ENCODE measurements at regions of chr1 and their contacts with region 1.

Region 1: GRCh38 chr1:55179177-55179835 is 35.9 kb downstream of the USP24 start:
- H3K4me3 Mint-ChIP-seq: no peak overlapping the region
- H3K27ac Mint-ChIP-seq: peak overlapping the region; percentile 1
- H3K4me1 Mint-ChIP-seq: peaks cover 26% of the 10 kb centered on the region
- H3K27me3 Mint-ChIP-seq: no peaks in the 10 kb centered on the region

Region 2: DNA sequence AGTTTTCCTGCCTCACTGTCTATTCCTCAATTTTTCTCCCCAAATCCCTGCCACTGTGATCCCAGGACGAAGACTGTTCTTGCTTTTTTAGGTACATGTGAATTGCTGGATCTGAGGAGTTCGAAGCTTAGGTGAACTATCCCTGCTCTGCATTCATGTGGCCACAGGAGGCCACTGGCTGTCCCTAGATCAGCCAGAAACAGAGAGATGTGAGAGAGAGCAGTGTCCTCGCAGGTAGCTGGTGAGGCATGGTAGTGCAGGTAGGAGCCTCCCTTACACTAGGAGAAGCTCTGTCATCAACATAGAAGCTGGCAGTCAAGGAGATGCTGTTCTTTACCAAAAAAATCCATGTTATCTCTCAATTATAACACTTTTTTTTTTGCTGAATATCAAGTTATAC is 35.6 kb before region 1 on chr1:
- intact Hi-C with region 1: no loop called
- H3K4me3 Mint-ChIP-seq: no peak overlapping the region
- H3K27ac Mint-ChIP-seq: no peak overlapping the region
- H3K4me1 Mint-ChIP-seq: no peaks in the 10 kb centered on the region
- H3K27me3 Mint-ChIP-seq: no peaks in the 10 kb centered on the region

Region 3: DNA sequence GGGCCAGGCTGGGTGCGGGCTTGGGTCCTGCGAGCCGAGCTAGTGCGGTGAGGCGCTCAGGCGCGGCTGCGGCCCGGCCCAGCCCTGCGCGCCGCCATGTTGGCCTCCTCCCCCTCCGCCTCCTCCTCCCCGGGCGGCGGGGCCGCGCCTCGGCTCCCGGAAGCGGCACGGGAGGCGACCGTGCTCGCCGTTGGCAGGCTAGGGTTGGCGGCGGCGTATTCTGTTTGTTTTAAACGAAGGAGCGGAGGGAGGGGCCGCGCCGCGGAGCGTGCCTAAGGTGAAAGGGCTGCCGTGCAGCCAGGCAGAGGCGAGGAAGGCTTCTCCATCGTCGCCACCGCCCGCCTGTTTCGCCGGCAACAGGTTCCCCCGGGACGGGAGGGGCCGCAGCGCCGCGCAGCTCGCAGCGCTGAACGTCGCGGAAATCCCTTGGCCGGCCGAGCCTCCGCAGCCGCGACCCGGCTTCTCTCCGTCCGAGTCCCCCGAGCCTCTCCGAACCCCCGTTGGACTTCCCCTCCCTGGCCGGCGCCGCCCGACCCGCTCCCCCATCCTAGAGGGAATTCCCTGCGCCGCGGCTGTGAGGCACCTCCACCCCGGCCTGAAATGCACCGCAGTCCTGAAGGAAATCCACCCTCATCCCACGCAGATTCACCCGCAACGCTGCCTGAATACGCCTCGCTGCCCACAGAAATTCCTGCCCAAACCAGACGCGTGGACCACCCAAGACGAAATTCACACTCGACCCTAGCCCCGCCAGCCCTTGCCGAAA is 36.1 kb after region 1 on chr1 and contains the start of gene USP24:
- intact Hi-C with region 1: no loop called
- H3K4me3 Mint-ChIP-seq: peak within 1 kb of the TSS; percentile 91
- H3K27ac Mint-ChIP-seq: peak within 1 kb of the TSS; percentile 92
- H3K4me1 Mint-ChIP-seq: peaks cover 69% of the 10 kb centered on the region
- H3K27me3 Mint-ChIP-seq: no peaks in the 10 kb centered on the region

Region 4: DNA sequence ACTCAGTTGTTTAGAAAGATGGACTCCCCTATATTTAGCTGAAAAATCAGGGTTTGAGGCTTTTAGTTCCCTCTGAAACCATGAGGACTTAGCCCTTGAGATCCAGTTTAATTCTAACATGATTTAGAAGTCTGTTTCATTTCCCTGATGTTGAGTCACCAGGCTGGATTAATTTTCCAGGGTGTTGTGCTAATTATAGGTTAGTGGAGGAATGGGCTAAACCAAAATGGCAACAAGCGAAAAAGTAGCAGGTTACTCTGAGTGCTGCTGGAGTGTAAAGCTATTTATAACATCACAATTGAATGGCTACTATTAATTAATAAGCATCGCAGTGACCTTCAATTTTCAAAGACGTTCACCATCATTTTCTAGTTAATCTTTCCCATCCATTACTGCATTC is 51.4 kb after region 1 on chr1:
- intact Hi-C with region 1: no loop called
- H3K4me3 Mint-ChIP-seq: no peak overlapping the region
- H3K27ac Mint-ChIP-seq: no peak overlapping the region
- H3K4me1 Mint-ChIP-seq: peaks cover 7% of the 10 kb centered on the region
- H3K27me3 Mint-ChIP-seq: peaks cover 8% of the 10 kb centered on the region

Region 5: DNA sequence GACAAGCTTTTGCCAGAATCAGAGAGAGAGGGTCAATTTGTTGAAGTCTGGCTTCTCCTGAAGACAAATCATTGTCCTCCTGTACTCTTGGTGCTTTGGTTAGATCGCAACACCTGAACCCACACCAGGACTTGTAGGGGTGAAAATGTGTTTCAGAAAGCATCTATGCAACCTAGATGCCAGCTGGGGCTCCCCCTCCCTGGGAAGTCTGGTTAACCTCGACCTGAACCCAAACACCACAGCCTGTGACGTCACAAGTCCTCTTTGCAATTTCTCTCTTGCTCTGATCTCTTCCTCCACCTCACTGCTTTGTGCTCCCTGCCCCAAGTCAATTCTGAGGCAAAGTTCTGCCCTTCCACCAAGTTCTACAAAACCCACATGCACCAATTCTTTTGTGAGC is 78.7 kb after region 1 on chr1:
- intact Hi-C with region 1: loop called (anchors 5 kb)
- H3K4me3 Mint-ChIP-seq: no peak overlapping the region
- H3K27ac Mint-ChIP-seq: no peak overlapping the region
- H3K4me1 Mint-ChIP-seq: peaks cover 16% of the 10 kb centered on the region
- H3K27me3 Mint-ChIP-seq: peaks cover 4% of the 10 kb centered on the region

Measured in dendritic cell treated with granulocyte-macrophage colony-stimulating factor and Interleukin-4, amounts not matched to agents 40 ng/mL and 50 ng/mL, for 4 days (primary cell).